ENCODE measurements at regions of chr1 and their contacts with region 1.

Region 1: DNA sequence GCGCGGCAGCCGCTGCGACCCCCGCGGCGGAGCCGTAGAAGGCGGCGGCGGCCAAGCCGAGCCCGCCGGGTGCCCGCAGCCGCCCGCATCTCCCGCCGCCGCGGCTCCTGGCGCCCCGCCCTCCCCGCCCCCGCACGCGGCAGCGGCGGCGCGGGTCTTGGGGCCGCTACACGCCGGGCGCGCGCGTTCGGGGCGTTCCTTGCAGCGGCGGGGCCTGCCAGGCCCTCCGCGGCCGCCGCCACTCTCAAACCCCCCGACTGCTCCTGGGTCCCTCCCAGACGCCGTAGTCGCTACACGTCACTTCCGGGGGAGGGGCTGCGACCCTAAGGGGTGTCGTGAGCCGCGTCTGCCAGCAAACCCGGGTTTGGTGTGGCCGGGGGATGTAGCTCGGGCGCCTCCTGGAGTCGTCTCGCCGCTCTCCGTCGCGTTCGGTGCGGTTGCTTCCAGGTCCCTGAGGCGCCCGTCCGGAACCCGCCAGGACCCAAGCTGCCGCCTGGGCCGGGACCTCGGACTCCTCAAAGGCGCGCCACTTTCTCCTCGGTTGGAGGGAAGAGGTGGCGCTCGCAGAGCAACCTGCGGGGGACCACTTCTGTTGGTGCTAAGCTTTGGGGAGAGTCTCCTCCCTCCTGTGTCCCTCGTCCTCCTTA is at the start of gene ELK4:
- DNase-seq: peak; percentile 99
- H3K4me3 Mint-ChIP-seq: peak within 1 kb of the TSS; percentile 96
- H3K27ac Mint-ChIP-seq: peak within 1 kb of the TSS; percentile 99
- H3K4me1 Mint-ChIP-seq: peaks cover 33% of the 10 kb centered on the region
- H3K27me3 Mint-ChIP-seq: peaks cover 7% of the 10 kb centered on the region
- total RNA-seq, gene ELK4: 68.8 and 80.3 TPM in 2 replicates

Region 2: DNA sequence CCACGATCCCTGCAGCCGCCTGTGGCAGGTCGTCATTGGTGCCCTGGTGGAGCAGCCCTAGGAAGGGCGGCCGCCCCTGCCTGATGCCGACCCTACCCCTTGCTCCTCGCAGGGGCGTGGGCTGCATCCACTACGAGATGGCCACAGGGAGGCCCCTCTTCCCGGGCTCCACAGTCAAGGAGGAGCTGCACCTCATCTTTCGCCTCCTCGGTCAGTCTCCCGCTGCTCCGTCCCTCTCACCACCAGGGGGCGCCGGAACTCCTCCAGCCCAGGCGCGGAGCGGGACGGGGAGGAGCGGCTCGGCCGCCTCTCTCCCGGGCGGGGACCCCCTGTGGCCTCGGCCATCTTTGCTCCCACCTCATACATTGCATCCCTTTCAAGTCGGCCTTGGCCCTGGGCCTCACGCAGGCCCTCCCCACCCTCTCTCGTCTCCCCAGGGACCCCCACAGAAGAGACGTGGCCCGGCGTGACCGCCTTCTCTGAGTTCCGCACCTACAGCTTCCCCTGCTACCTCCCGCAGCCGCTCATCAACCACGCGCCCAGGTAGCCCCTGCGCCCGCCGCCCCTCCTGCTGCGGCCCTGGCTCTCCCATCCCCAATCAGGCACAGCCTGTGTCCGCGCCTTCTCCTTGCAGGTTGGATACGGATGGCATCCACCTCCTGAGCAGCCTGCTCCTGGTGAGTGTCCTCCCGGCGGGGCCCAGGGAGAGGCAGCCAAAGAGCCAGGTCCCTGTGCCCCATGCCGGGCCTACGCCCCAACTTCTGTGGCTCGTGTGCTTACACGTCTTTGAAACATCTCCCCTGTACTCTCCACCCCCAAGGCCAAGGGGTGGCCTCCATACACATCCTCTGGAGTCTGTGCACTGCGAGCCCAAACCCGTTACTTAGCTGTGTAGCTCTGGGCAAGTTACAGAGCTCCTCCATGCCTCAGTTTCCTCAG is 102.7 kb before region 1 on chr1:
- intact Hi-C with region 1: loop called (anchors 1 kb)
- DNase-seq: peak; percentile 70
- H3K4me3 Mint-ChIP-seq: peak overlapping the region; percentile 37
- H3K27ac Mint-ChIP-seq: no peak overlapping the region
- H3K4me1 Mint-ChIP-seq: peaks cover 3% of the 10 kb centered on the region
- H3K27me3 Mint-ChIP-seq: peaks cover 11% of the 10 kb centered on the region

Region 3: DNA sequence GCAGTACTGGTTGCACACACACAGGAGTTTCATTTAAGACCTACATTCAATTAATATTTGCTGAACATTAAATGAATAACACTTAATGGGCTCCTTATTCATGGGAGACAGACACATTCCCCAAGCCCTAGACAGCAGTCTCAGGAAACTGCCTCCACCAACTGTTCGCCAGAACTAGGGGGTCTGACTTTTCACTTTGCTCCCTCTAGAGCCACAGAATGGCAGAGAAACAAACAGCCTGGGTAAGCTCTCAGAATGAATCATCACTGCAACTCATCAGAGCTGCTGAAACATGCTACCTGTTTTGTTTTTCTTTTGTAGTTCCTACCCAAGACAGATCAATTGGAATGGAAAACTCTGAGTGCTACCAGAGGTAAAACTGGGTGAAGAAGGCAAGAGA is 31.8 kb before region 1 on chr1:
- intact Hi-C with region 1: loop called (anchors 2 kb)
- DNase-seq: no peak
- H3K4me3 Mint-ChIP-seq: no peak overlapping the region
- H3K27ac Mint-ChIP-seq: peak overlapping the region; percentile 42
- H3K4me1 Mint-ChIP-seq: peaks cover 32% of the 10 kb centered on the region
- H3K27me3 Mint-ChIP-seq: no peaks in the 10 kb centered on the region

Region 4: GRCh38 chr1:205619376-205619775 is 12.5 kb before region 1 on chr1:
- intact Hi-C with region 1: no loop called
- DNase-seq: no peak
- H3K4me3 Mint-ChIP-seq: no peak overlapping the region
- H3K27ac Mint-ChIP-seq: no peak overlapping the region
- H3K4me1 Mint-ChIP-seq: peaks cover 13% of the 10 kb centered on the region
- H3K27me3 Mint-ChIP-seq: no peaks in the 10 kb centered on the region

Region 5: DNA sequence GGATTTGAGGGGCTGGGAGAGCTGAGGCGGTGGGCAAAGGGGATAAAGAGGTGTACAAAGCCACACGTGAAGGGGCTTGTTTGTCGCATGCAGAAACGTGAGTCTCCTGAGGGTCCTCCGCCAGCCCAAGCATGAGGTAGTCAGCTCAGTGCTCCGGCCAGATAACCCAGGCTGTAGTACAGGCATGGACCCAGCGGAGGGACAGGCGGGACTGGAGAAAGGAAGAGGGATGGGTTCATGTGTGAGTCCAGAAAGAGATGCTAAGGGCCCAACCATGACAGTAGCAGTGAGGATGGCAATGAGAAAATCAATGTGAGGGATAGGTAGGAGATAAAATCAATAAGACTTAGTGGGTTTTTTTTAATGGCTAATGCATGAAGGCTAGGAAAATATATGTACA is 13.7 kb after region 1 on chr1:
- intact Hi-C with region 1: loop called (anchors 1 kb)
- DNase-seq: no peak
- H3K4me3 Mint-ChIP-seq: no peak overlapping the region
- H3K27ac Mint-ChIP-seq: no peak overlapping the region
- H3K4me1 Mint-ChIP-seq: no peaks in the 10 kb centered on the region
- H3K27me3 Mint-ChIP-seq: peaks cover 4% of the 10 kb centered on the region

Region 6: DNA sequence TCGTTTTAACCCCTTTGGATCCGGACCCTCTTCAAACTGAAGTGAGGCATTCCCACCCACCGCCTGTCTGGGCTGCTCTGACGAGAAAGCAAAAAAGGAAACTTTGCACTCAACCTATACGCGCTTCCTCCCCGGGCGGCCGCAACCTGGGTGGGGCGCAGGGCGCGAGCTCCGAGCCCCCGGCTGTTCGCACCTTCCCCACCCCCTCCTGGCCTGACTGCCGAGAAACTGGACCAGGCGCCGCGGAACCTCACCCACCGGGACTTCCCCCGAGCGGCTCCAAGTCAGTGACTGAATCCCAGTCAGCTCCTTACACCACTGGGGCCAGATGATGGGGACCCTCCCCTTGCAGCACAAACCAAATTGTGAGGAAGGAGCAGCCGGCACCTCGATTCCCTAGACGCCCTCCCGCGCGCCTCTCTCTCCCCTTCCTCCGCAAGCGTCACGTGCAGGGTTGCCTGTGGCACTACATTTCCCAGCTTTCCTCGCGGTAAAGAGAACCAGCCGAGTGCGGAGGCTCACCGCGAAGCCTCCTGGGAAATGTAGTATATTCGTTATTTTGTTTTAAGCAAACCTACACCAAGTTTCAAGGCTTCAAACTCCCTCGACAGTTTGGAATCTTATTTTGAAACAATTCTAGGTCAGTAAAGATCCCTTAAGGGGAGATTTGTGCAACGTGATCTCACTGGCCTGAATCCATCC is 143.3 kb after region 1 on chr1 and contains the start of gene RAB29:
- intact Hi-C with region 1: loop called (anchors 5 kb)
- DNase-seq: peak; percentile 81
- H3K4me3 Mint-ChIP-seq: peak within 1 kb of the TSS; percentile 96
- H3K27ac Mint-ChIP-seq: peak within 1 kb of the TSS; percentile 93
- H3K4me1 Mint-ChIP-seq: peaks cover 51% of the 10 kb centered on the region
- H3K27me3 Mint-ChIP-seq: peaks cover 4% of the 10 kb centered on the region
- total RNA-seq, gene RAB29: 26.2 and 26.7 TPM in 2 replicates